ENCODE measurements at regions of chr1 and their contacts with region 1.

Region 1: GRCh38 chr1:215606564-215607168 is 39.6 kb downstream of the KCTD3 start:
- DNase-seq: peak; percentile 42
- ATAC-seq: no peak
- H3K4me3 ChIP-seq: no peak overlapping the region
- H3K27ac ChIP-seq: no peak overlapping the region
- H3K4me1 ChIP-seq: peaks cover 7% of the 10 kb centered on the region
- H3K27me3 ChIP-seq: no peaks in the 10 kb centered on the region
- CTCF ChIP-seq: peak; percentile 49
- POLR2A ChIP-seq: no peak
- RAD21 ChIP-seq: peak; percentile 47

Region 2: GRCh38 chr1:215566556-215567490 is 39.8 kb before region 1 on chr1 and contains the start of gene KCTD3:
- CTCF ChIA-PET with region 1: interaction called, 3 read pairs
- POLR2A ChIA-PET with region 1: no interaction called
- dilution Hi-C with region 1: no loop called
- in situ Hi-C with region 1: no loop called
- intact Hi-C with region 1: loop called (anchors 2 kb)
- DNase-seq: peak; percentile 61
- ATAC-seq: peak; percentile 87
- H3K4me3 ChIP-seq: peak within 1 kb of the TSS; percentile 84
- H3K27ac ChIP-seq: peak within 1 kb of the TSS; percentile 87
- H3K4me1 ChIP-seq: peaks cover 4% of the 10 kb centered on the region
- H3K27me3 ChIP-seq: no peaks in the 10 kb centered on the region
- CTCF ChIP-seq: no peak
- POLR2A ChIP-seq: no peak
- RAD21 ChIP-seq: no peak
- total RNA-seq, gene KCTD3: 49.5 and 51.7 TPM in 2 replicates